HAP-1 (cell line): ENCODE measurements at regions of chr4 and their contacts with region 1.

Region 1: DNA sequence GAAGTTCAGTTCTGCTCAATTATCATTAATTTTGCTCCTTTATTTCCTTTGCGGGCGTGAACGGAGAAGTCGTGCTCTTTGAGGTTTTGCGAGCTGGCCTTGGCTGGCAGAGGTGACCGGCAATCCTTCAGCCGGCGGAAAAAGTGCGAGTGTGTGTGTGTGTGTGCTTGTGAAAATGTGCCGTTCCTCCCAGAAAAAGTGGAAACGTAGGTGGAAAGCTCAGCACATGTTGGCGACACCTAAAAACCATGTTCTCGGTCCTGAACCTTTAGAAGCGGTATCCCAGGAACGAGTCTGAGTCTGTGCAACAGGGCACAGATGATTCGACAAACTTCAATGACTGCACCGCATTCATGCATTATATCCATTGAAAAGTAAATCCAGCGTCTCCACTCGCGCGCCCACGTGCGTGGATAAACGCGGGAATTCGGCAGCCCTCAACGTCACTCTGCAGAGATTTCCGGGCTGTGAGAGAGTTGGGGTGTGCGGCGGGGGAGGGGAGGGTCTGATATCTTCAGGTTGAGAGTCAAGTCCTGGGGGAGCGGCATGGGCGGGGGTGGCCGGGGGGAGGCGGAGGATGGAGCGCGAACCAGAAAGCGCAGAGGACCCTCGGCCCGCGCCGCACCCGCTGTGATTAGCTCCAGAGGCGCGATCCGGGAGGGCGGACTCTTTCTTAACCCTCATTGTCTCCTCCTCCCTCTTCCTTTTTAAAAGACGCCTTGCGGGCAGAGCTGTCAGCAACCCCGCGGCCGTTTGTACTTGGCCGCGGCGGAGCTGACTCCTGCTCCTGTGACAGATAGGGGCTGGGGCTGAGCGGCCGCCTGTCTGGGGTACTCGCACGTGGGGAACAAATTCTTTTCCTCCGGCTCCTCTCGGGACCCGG is at the start of gene SHISA3:
- DNase-seq: peak; percentile 86 to 92
- H3K4me3 ChIP-seq: peak within 1 kb of the TSS; percentile 75
- H3K4me1 ChIP-seq: peaks cover 14% of the 10 kb centered on the region
- H3K27me3 ChIP-seq: no peaks in the 10 kb centered on the region

Region 2: DNA sequence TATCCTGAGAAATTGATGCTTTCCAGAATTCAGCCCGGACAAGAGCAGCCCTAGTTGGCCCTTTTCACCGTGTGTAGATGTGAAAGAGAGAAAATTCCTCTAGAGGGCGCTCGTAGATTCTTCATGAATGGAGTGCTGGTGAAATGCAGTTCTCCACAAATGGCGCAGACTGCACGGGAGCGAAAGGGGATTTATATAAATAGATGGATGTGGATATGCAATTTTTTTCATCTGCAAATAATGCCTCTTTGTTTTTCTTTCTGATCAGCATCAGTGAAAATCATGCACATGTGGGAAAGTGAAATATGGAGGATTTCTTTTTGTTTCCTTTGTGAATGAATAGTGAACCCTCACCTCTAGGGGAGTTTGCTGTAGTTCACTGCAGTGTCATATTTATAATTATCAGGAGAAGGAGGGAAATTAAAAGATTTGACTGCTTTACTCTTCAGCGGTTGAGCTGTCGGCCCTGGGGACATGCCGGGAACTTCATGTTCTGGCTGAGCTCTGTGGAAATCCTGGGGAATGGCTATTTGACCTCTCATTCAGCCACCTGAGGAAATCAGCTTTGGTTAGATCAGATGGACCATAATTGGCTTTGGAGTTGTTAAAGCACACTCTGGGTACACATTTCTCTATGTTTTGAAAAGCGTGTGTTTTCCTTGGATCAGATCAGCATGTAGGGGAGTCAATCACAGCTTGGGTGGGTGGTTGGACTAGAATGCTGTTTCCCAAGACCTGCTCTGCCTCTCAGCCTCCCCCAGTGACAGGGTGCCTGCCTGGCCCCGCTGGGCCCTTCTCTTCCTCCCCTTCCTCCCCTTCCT is 114.7 kb before region 1 on chr4:
- in situ Hi-C with region 1: loop called (anchors 10 kb)
- DNase-seq: peak; percentile 83 to 86
- H3K4me3 ChIP-seq: no peak overlapping the region
- H3K4me1 ChIP-seq: peaks cover 10% of the 10 kb centered on the region
- H3K27me3 ChIP-seq: no peaks in the 10 kb centered on the region